Calu3 (cell line): ENCODE measurements at regions of chr18 and their contacts with region 1.

Region 1: GRCh38 chr18:33495278-33495677 is 54.8 kb upstream of the CCDC178 start:
- DNase-seq: peak; percentile 28
- H3K4me3 Mint-ChIP-seq: no peak overlapping the region
- H3K27ac Mint-ChIP-seq: no peak overlapping the region
- H3K4me1 Mint-ChIP-seq: no peaks in the 10 kb centered on the region
- H3K27me3 Mint-ChIP-seq: peaks cover 6% of the 10 kb centered on the region
- CTCF ChIP-seq: peak; percentile 26

Region 2: GRCh38 chr18:32714571-32715148 is 780.6 kb before region 1 on chr18:
- CTCF ChIA-PET with region 1: no interaction called
- intact Hi-C with region 1: loop called (anchors 10 kb)
- DNase-seq: peak; percentile 61
- H3K4me3 Mint-ChIP-seq: no peak overlapping the region
- H3K27ac Mint-ChIP-seq: no peak overlapping the region
- H3K4me1 Mint-ChIP-seq: no peaks in the 10 kb centered on the region
- H3K27me3 Mint-ChIP-seq: no peaks in the 10 kb centered on the region
- CTCF ChIP-seq: peak; percentile 42

Region 3: DNA sequence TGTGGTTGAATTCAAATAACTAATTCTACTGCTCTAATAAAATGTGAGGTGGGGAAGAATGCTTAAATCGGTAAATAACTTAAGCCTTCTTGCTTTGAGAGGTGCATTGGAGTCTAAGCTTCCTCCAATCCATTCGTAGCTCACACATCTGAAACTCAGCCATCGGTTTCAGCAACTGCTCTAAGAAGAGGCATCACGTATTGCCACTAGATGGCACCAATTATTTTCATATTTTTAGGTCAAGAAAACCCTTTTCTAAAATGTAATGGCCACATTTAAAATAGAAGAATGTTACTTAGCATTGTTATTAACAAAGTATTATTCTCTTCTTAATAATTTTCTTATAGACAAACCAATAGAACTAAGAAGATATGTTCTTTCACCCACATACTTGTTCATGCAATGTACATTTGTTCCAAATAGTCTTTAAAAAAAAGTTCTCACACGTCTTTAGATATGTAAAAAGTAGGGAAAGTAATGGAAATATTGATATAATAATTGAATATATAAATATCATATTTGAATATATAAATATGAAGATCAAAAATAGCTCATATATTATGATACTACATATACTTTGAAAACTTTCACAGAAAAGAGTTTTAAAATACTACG is 284.6 kb before region 1 on chr18:
- CTCF ChIA-PET with region 1: interaction called, 4 read pairs
- intact Hi-C with region 1: loop called (anchors 5 kb)
- DNase-seq: peak; percentile 13
- H3K4me3 Mint-ChIP-seq: no peak overlapping the region
- H3K27ac Mint-ChIP-seq: no peak overlapping the region
- H3K4me1 Mint-ChIP-seq: no peaks in the 10 kb centered on the region
- H3K27me3 Mint-ChIP-seq: no peaks in the 10 kb centered on the region
- CTCF ChIP-seq: peak; percentile 42

Region 4: DNA sequence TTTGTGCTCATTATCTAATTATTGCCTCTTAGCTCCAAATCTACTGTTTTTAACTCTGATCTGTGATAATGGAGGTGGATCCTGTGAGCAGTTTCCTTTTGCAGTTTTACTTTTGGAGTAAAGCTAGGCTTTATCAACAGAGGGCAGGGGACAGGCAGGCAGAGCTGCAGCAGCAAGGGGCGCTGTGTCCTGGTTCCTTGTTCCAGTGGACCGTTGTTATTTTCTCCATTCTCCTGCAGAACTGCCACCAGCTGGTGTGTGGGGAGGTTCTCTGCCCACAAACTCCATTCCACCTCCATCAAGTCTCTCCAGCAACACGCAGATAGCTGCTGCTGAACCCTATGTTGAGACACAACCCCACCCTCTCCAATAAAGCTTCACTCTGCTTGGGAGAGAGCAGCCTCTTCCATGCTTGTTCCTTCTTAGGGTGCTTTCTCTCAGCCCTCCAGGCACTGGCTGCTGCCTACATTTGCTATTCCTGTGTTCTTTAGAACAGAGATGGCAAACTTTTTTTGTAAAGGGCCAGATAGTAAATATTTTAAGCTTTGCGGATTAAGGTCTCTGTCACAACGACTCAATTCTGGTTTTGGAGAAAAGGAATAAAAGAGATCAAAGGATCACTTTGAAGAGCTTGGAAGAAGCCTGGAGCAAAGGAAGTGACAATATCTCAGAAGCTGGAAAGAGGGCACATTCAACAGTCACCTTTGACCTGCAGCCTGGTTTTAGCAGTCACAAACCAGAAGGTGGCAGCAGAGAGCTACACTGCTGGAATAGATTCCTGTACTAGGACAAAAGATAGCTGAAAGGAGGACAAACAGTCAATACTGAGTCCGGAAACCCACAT is 263.6 kb before region 1 on chr18:
- CTCF ChIA-PET with region 1: interaction called, 8 read pairs
- intact Hi-C with region 1: loop called (anchors 1 kb)
- DNase-seq: peak; percentile 77
- H3K4me3 Mint-ChIP-seq: no peak overlapping the region
- H3K27ac Mint-ChIP-seq: no peak overlapping the region
- H3K4me1 Mint-ChIP-seq: peaks cover 8% of the 10 kb centered on the region
- H3K27me3 Mint-ChIP-seq: no peaks in the 10 kb centered on the region
- CTCF ChIP-seq: peak; percentile 92

Region 5: DNA sequence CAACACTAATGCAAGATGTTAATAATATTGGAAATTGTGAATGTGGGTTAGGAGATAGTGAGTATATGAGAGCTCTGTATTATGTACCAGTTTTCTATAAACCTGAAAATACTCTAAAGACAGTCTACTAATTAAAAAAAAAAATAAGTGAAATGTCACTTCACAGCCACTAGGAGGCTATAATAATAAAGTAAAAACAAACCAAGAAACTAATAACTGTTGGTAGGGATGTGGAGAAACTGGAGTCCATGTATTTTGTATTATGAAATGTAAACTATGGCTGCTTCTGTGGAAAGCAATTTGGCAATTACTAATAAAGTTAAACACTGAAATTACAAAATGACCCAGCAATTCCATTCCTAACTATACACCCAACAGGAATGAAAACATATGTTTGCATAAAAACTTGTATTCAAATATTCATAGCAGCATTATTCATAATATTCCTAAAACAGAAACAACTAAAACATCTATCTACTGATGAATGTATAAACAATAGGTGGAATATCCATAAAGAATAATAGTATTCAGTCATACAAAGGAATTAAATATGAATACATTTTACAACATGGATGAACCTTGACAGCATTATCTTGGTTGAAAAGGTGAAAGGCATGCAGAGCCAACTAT is 90.9 kb before region 1 on chr18:
- CTCF ChIA-PET with region 1: no interaction called
- intact Hi-C with region 1: loop called (anchors 2 kb)
- DNase-seq: no peak
- H3K4me3 Mint-ChIP-seq: no peak overlapping the region
- H3K27ac Mint-ChIP-seq: no peak overlapping the region
- H3K4me1 Mint-ChIP-seq: no peaks in the 10 kb centered on the region
- H3K27me3 Mint-ChIP-seq: no peaks in the 10 kb centered on the region
- CTCF ChIP-seq: peak; percentile 51

Region 6: DNA sequence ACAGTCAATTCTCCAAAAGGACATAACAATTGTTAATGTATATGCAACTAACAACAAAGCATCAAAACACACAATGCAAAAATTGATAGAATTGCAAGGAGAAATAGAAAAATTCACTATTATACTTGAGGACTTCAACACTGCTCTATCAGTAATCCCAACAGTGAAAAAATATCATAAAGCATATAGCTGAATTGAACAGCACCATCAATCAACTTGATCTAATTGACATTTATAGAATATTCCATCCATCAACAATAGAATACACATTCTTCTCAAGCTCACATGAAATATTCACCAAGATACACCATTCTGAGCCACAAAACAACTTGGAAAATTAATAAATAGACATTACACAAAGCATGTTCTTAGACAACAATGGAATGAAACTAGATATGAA is 22.7 kb after region 1 on chr18:
- CTCF ChIA-PET with region 1: no interaction called
- intact Hi-C with region 1: no loop called
- DNase-seq: no peak
- H3K4me3 Mint-ChIP-seq: no peak overlapping the region
- H3K27ac Mint-ChIP-seq: no peak overlapping the region
- H3K4me1 Mint-ChIP-seq: no peaks in the 10 kb centered on the region
- H3K27me3 Mint-ChIP-seq: no peaks in the 10 kb centered on the region
- CTCF ChIP-seq: no peak